ENCODE measurements at regions of chr9 and their contacts with region 1.

Region 1: GRCh38 chr9:73200694-73201452 is 49.2 kb downstream of the ANXA1 start:
- DNase-seq: no peak
- H3K4me3 ChIP-seq: no peak overlapping the region
- H3K4me3 Mint-ChIP-seq: no peak overlapping the region
- H3K27ac Mint-ChIP-seq: no peak overlapping the region
- H3K4me1 ChIP-seq: no peaks in the 10 kb centered on the region
- H3K4me1 Mint-ChIP-seq: no peaks in the 10 kb centered on the region
- H3K27me3 ChIP-seq: no peaks in the 10 kb centered on the region
- H3K27me3 Mint-ChIP-seq: no peaks in the 10 kb centered on the region
- CTCF ChIP-seq: peak in 1 of 2 experiments; percentile 19

Region 2: GRCh38 chr9:73667717-73668116 is 466.8 kb after region 1 on chr9:
- CTCF ChIA-PET with region 1: no interaction called
- POLR2A ChIA-PET with region 1: no interaction called
- intact Hi-C with region 1: loop called (anchors 5 kb)
- DNase-seq: peak; percentile 1 to 32
- H3K4me3 ChIP-seq: no peak overlapping the region
- H3K4me3 Mint-ChIP-seq: no peak overlapping the region
- H3K27ac Mint-ChIP-seq: no peak overlapping the region
- H3K4me1 ChIP-seq: no peaks in the 10 kb centered on the region
- H3K4me1 Mint-ChIP-seq: no peaks in the 10 kb centered on the region
- H3K27me3 ChIP-seq: no peaks in the 10 kb centered on the region
- H3K27me3 Mint-ChIP-seq: no peaks in the 10 kb centered on the region
- CTCF ChIP-seq: peak in 1 of 2 experiments; percentile 6

Measured in Caco-2 (cell line).